Activated naive CD4-positive, alpha-beta T cell treated with anti-CD3 and anti-CD28 coated beads for 36 hours (primary cell): ENCODE measurements at regions of chr2 and their contacts with region 1.

Region 1: DNA sequence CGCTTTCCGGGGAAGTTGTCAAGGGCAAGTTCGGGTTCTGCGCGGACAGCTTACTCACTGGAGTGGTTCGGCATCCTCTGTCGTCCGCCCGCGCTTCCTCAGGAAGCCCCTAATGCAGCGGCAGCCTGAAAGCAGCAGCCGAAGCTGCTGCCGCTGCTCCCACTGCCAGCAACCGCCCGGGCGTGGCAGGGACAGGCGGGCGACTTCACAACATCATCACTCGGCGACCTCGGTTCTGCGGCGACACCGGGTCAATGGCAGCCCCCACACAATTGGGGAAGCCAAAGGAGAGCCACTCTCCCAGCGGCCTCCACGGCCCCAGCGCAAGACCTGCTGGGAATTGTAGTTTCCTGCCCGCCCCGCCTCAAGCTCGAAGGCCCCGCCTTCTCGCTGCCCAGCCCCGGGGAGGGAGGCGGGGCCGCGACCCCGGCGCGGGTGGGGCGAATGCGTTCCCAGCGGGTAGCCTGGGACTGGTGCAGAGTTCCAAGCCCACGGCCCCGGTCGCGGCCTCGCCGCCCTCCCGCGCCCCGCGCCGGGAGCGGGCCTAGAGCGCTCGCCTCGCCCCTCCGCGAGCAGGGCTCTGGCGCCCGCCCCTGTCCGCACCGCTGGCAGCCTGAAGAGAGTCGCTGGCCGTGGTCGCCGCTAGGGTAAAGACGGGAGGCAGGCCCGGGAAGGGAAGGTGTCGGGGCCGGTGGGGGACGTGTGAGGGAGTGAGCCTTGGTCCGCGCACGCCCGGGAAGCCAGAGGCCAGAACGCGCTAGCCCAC is at the starts of genes STRADB and TRAK2:
- DNase-seq: peak; percentile 96
- H3K4me3 Mint-ChIP-seq: peak within 1 kb of the TSS; percentile 95
- H3K27ac Mint-ChIP-seq: peak within 1 kb of the TSS; percentile 94
- H3K4me1 Mint-ChIP-seq: peaks cover 51% of the 10 kb centered on the region
- H3K27me3 Mint-ChIP-seq: no peaks in the 10 kb centered on the region
- total RNA-seq, gene STRADB: 17.6 to 19.1 TPM
- total RNA-seq, gene TRAK2: 10.4 TPM

Region 2: GRCh38 chr2:200963124-200963917 is 488.2 kb before region 1 on chr2 and contains the start of gene ORC2:
- CTCF ChIA-PET with region 1: no interaction called
- intact Hi-C with region 1: loop called (anchors 1 kb)
- DNase-seq: peak; percentile 94
- H3K4me3 Mint-ChIP-seq: peak within 1 kb of the TSS; percentile 88
- H3K27ac Mint-ChIP-seq: peak within 1 kb of the TSS; percentile 94
- H3K4me1 Mint-ChIP-seq: peaks cover 56% of the 10 kb centered on the region
- H3K27me3 Mint-ChIP-seq: no peaks in the 10 kb centered on the region
- total RNA-seq, gene ORC2: 53.7 to 56.8 TPM

Region 3: DNA sequence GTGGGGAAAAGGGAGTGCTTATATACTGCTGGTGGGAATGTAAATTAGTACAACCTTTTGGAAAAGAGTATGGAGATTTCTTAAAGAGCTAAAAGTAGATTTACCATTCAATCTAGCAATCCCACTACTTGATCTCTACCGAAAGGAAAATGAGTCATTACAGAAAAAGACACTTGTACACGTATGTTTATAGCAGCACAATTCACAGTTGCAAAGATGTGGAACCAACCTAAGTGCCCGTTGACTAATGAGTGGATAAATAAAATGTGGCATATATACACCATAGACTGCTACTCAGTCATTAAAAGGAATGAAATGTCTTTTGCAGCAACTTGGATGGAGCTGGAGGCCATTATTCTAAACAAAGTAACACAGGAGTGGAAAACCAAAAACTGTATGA is 123.8 kb before region 1 on chr2:
- CTCF ChIA-PET with region 1: no interaction called
- intact Hi-C with region 1: no loop called
- DNase-seq: no peak
- H3K4me3 Mint-ChIP-seq: no peak overlapping the region
- H3K27ac Mint-ChIP-seq: no peak overlapping the region
- H3K4me1 Mint-ChIP-seq: no peaks in the 10 kb centered on the region
- H3K27me3 Mint-ChIP-seq: no peaks in the 10 kb centered on the region

Region 4: DNA sequence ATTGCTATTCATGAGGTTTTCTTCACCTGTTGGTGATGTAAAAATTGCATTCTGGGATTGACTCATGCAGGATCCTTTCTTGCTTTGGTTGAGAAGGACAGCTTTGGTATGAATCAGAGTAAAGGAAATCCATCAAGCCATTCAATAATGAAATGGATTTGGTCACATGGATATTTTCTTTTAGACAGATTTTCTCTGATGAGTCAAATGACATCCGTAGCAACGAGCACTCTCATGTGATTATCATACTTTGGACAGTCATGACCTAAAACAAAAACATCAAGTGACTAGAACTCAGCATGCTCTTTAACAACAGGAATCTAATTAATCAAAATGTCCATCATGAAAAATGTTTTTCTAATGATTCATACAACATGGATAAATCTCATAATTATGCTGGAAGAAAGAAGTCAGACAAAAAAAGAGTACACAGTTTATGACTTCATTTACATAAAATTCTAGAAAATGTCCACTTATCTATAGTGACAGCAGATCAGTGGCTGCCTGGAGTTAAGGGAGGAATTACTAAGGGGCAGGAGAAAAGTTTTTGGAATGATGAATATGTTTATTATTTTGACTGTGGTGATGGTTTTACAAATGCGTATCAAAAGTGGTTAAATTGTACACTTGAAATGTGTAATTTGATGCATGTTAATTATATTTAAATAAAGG is 30.9 kb before region 1 on chr2:
- CTCF ChIA-PET with region 1: interaction called, 4 read pairs
- intact Hi-C with region 1: loop called (anchors 1 kb)
- DNase-seq: no peak
- H3K4me3 Mint-ChIP-seq: no peak overlapping the region
- H3K27ac Mint-ChIP-seq: peak overlapping the region; percentile 65
- H3K4me1 Mint-ChIP-seq: peaks cover 50% of the 10 kb centered on the region
- H3K27me3 Mint-ChIP-seq: no peaks in the 10 kb centered on the region

Region 5: DNA sequence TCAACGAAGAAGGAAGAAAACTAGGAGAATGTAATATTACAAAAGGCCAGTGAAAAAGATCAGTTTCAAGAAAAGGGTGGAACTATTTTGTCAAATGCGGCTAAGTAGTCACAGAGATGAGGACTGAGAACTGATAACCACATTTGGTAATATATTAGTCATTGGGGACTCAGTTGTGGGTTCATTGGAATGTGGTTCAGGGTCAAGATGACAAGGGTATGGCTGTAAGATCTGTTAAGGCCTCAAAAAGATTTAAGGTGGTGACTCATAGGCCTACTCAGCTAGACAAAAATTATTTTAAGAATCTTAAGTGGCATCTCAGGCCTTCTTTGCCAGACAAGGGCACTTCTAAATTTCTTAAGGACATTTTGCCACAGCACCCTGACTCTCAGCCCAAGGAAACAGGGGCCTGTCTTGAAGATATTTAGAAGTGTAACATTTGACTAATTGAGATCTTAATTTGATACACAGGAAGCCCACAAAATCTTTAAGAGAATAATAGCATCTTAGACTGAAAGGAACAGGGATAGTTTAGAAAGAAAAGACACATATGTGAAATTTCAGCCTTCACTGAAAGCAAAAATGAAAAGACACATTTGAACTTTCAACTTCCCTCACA is 81.3 kb after region 1 on chr2:
- CTCF ChIA-PET with region 1: no interaction called
- intact Hi-C with region 1: loop called (anchors 1 kb)
- DNase-seq: peak; percentile 20
- H3K4me3 Mint-ChIP-seq: no peak overlapping the region
- H3K27ac Mint-ChIP-seq: no peak overlapping the region
- H3K4me1 Mint-ChIP-seq: peaks cover 7% of the 10 kb centered on the region
- H3K27me3 Mint-ChIP-seq: no peaks in the 10 kb centered on the region

Region 6: GRCh38 chr2:201780674-201781581 is 329.5 kb after region 1 on chr2 and contains the start of gene ALS2:
- CTCF ChIA-PET with region 1: no interaction called
- intact Hi-C with region 1: loop called (anchors 1 kb)
- DNase-seq: peak; percentile 96
- H3K4me3 Mint-ChIP-seq: peak within 1 kb of the TSS; percentile 86
- H3K27ac Mint-ChIP-seq: peak within 1 kb of the TSS; percentile 83
- H3K4me1 Mint-ChIP-seq: peaks cover 13% of the 10 kb centered on the region
- H3K27me3 Mint-ChIP-seq: peaks cover 3% of the 10 kb centered on the region
- total RNA-seq, gene ALS2: 9.4 to 11.2 TPM